ENCODE measurements at regions of chr7 and their contacts with region 1.

Region 1: GRCh38 chr7:65872776-65873581 is at the start of gene VKORC1L1:
- DNase-seq: peak; percentile 90 to 98 (median 94)
- ATAC-seq: peak; percentile 86
- H3K4me3 ChIP-seq: peak within 1 kb of the TSS; percentile 48 to 69
- H3K4me3 Mint-ChIP-seq: peak within 1 kb of the TSS; percentile 85
- H3K27ac ChIP-seq: peak within 1 kb of the TSS in 1 of 2 experiments; percentile 54
- H3K27ac Mint-ChIP-seq: peak within 1 kb of the TSS; percentile 66
- H3K4me1 ChIP-seq: no peaks in the 10 kb centered on the region
- H3K4me1 Mint-ChIP-seq: peaks cover 8% of the 10 kb centered on the region
- H3K27me3 ChIP-seq: no peaks in the 10 kb centered on the region
- H3K27me3 Mint-ChIP-seq: no peaks in the 10 kb centered on the region
- CTCF ChIP-seq: no peak
- total RNA-seq, gene VKORC1L1: 1.4 to 2.0 TPM

Region 2: GRCh38 chr7:64313740-64314491 is 1559.1 kb before region 1 on chr7 and contains the start of gene ZNF736:
- CTCF ChIA-PET with region 1: no interaction called
- POLR2A ChIA-PET with region 1: no interaction called
- intact Hi-C with region 1: loop called in 1 of 2 experiments (anchors 5 kb)
- DNase-seq: peak; percentile 71 to 94 (median 86)
- ATAC-seq: peak; percentile 100
- H3K4me3 ChIP-seq: peak within 1 kb of the TSS; percentile 66 to 98
- H3K4me3 Mint-ChIP-seq: peak within 1 kb of the TSS; percentile 99
- H3K27ac ChIP-seq: peak within 1 kb of the TSS; percentile 76 to 88
- H3K27ac Mint-ChIP-seq: peak within 1 kb of the TSS; percentile 98
- H3K4me1 ChIP-seq: peaks cover 25% of the 10 kb centered on the region
- H3K4me1 Mint-ChIP-seq: peaks cover 32% of the 10 kb centered on the region
- H3K27me3 ChIP-seq: no peaks in the 10 kb centered on the region
- H3K27me3 Mint-ChIP-seq: no peaks in the 10 kb centered on the region
- CTCF ChIP-seq: no peak
- total RNA-seq, gene ZNF736: 23.4 to 26.6 TPM

Region 3: DNA sequence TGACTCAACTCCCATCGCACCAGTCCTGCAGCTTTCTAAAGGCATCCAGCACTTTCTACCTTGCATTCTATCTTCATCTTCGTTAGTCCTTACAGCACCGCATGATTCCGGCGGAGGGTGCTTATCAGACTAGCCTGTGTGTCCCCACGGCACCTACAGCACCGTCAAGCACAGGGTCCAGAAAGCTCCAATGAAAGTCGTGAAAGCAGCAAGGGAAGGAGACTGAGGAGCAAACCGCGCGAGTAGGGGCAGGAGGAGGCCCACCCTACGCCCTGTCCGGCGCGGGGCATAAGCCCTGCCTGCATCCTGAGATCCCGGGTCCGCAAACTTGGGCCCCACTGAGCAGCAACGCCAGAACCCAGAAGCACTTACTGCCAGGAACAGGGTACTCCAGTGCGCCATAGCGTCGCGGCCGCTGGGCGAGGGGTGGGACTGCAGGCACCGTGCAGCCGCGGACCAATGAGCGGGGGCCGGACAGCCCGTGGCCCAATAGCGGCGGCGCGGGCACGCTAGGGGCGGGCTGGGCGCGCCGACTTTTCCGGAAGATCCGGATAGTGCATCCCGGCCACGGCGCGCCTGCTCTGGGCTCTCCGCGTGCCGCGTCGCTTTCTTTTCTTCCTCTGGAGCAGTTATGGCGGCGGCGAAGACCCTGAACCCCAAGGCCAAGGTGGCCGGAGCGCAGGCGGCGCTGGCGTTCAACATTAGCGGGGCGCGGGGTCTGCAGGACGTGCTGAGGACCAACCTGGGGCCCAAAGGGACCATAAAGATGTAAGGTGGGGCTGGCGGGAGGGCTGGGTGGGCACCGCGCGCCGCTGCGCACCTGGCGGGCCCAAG is 122.3 kb before region 1 on chr7:
- CTCF ChIA-PET with region 1: no interaction called
- POLR2A ChIA-PET with region 1: no interaction called
- intact Hi-C with region 1: loop called (anchors 1 to 5 kb)
- DNase-seq: peak; percentile 65 to 91 (median 87)
- ATAC-seq: peak; percentile 96
- H3K4me3 ChIP-seq: peak overlapping the region; percentile 77 to 88
- H3K4me3 Mint-ChIP-seq: peak overlapping the region; percentile 88
- H3K27ac ChIP-seq: peak overlapping the region; percentile 74 to 81
- H3K27ac Mint-ChIP-seq: peak overlapping the region; percentile 88
- H3K4me1 ChIP-seq: peaks cover 16% of the 10 kb centered on the region
- H3K4me1 Mint-ChIP-seq: peaks cover 35% of the 10 kb centered on the region
- H3K27me3 ChIP-seq: no peaks in the 10 kb centered on the region
- H3K27me3 Mint-ChIP-seq: no peaks in the 10 kb centered on the region
- CTCF ChIP-seq: no peak

Region 4: GRCh38 chr7:65809259-65809981 is 63.6 kb before region 1 on chr7:
- CTCF ChIA-PET with region 1: no interaction called
- POLR2A ChIA-PET with region 1: no interaction called
- intact Hi-C with region 1: no loop called
- DNase-seq: no peak
- ATAC-seq: no peak
- H3K4me3 ChIP-seq: no peak overlapping the region
- H3K4me3 Mint-ChIP-seq: no peak overlapping the region
- H3K27ac ChIP-seq: no peak overlapping the region
- H3K27ac Mint-ChIP-seq: no peak overlapping the region
- H3K4me1 ChIP-seq: no peaks in the 10 kb centered on the region
- H3K4me1 Mint-ChIP-seq: no peaks in the 10 kb centered on the region
- H3K27me3 ChIP-seq: no peaks in the 10 kb centered on the region
- H3K27me3 Mint-ChIP-seq: no peaks in the 10 kb centered on the region
- CTCF ChIP-seq: no peak

Region 5: GRCh38 chr7:66075590-66076461 is 202.8 kb after region 1 on chr7 and contains the start of gene ASL:
- CTCF ChIA-PET with region 1: no interaction called
- POLR2A ChIA-PET with region 1: no interaction called
- intact Hi-C with region 1: loop called in 1 of 2 experiments (anchors 5 kb)
- DNase-seq: peak; percentile 65 to 93 (median 84)
- ATAC-seq: peak; percentile 98
- H3K4me3 ChIP-seq: peak within 1 kb of the TSS; percentile 66 to 96
- H3K4me3 Mint-ChIP-seq: peak within 1 kb of the TSS; percentile 87
- H3K27ac ChIP-seq: peak within 1 kb of the TSS; percentile 55 to 67
- H3K27ac Mint-ChIP-seq: no peak within 1 kb of the TSS
- H3K4me1 ChIP-seq: peaks cover 11% of the 10 kb centered on the region
- H3K4me1 Mint-ChIP-seq: peaks cover 14% of the 10 kb centered on the region
- H3K27me3 ChIP-seq: no peaks in the 10 kb centered on the region
- H3K27me3 Mint-ChIP-seq: no peaks in the 10 kb centered on the region
- CTCF ChIP-seq: no peak
- total RNA-seq, gene ASL: 6.8 to 7.5 TPM

Region 6: DNA sequence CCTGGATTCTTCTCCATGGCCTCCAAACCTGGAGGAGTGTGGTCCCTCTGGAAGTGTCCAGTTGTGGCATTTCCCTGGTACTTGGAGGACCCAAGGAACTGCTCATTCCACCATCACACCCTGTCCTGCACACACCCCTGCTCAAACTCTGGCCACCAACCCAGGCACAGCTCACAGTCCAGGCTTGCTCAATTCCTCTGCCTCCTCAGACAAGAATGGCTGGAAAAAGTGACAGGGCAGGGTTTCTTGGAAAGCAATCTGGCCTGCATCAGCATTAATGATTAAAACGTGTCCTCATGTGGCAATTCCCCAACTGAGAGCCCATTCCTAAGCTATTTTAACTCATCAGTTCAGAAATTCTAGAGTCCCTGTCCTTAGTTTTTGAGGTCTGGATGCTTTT is 314.9 kb after region 1 on chr7:
- CTCF ChIA-PET with region 1: no interaction called
- POLR2A ChIA-PET with region 1: no interaction called
- intact Hi-C with region 1: no loop called
- DNase-seq: no peak
- ATAC-seq: no peak
- H3K4me3 ChIP-seq: no peak overlapping the region
- H3K4me3 Mint-ChIP-seq: no peak overlapping the region
- H3K27ac ChIP-seq: no peak overlapping the region
- H3K27ac Mint-ChIP-seq: no peak overlapping the region
- H3K4me1 ChIP-seq: no peaks in the 10 kb centered on the region
- H3K4me1 Mint-ChIP-seq: no peaks in the 10 kb centered on the region
- H3K27me3 ChIP-seq: no peaks in the 10 kb centered on the region
- H3K27me3 Mint-ChIP-seq: no peaks in the 10 kb centered on the region
- CTCF ChIP-seq: no peak

Region 7: DNA sequence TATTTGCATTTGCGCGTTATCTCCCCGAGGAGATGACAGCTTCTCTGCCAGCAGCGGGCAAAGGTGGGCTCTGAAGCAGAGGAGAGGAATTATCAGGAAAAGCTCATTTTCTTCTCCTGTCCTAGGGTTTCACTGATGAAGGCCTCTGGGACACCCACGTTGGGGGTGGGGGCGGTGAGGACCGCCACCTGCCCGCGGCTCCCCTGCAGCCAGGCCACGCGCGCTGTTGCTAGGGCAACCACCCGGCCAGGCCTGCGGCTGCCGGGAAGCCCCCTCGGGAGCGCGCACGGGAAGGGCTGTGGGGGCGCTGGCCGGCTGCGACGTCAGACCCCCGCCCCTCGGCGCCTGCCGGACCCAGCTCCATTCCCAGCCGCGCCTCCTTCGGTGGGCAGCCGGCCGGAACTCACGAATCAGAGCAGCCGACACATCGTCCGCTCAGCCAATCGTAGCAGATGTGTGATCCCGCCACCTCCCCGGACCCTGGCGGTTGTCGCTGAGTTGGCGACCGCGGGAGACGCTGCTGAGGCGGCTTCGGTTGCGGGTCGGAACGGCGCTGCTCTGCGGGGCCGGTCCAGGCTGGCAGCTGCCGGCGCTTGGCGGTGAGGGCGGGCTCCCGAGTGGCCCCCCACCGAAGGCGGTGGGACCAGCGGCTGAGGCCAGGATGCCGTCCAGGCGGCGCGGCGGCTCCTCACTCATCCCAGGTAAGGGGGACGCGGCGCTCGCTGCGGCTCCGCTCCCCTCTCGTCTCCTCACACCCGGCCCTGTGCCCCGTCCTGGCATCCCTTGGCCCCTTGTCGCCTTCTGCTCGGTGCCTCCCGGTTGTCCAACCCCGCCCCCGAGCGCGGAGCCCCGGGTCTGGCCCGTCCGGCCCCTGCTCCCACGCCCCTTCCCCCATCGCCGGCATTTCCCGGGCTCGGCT is 332.1 kb after region 1 on chr7 and contains the start of gene TPST1:
- CTCF ChIA-PET with region 1: no interaction called
- POLR2A ChIA-PET with region 1: no interaction called
- intact Hi-C with region 1: loop called in 1 of 2 experiments (anchors 5 kb)
- DNase-seq: peak; percentile 61 to 90 (median 75)
- ATAC-seq: peak; percentile 89
- H3K4me3 ChIP-seq: peak within 1 kb of the TSS; percentile 59 to 84
- H3K4me3 Mint-ChIP-seq: peak within 1 kb of the TSS; percentile 89
- H3K27ac ChIP-seq: peak within 1 kb of the TSS in 1 of 2 experiments; percentile 54
- H3K27ac Mint-ChIP-seq: peak within 1 kb of the TSS; percentile 66
- H3K4me1 ChIP-seq: peaks cover 35% of the 10 kb centered on the region
- H3K4me1 Mint-ChIP-seq: peaks cover 42% of the 10 kb centered on the region
- H3K27me3 ChIP-seq: peaks cover 0 to 3% of the 10 kb centered on the region in 2 experiments
- H3K27me3 Mint-ChIP-seq: peaks cover 6% of the 10 kb centered on the region
- CTCF ChIP-seq: peak; percentile 48
- total RNA-seq, gene TPST1: 4.3 to 6.6 TPM

Region 8: GRCh38 chr7:66844552-66845378 is 971.8 kb after region 1 on chr7:
- CTCF ChIA-PET with region 1: no interaction called
- POLR2A ChIA-PET with region 1: no interaction called
- intact Hi-C with region 1: loop called (anchors 10 kb)
- DNase-seq: peak; percentile 98 to 100 (median 99)
- ATAC-seq: peak; percentile 87
- H3K4me3 ChIP-seq: peak overlapping the region; percentile 90 to 96
- H3K4me3 Mint-ChIP-seq: peak overlapping the region; percentile 97
- H3K27ac ChIP-seq: peak overlapping the region; percentile 97 to 98
- H3K27ac Mint-ChIP-seq: peak overlapping the region; percentile 100
- H3K4me1 ChIP-seq: peaks cover 13% of the 10 kb centered on the region
- H3K4me1 Mint-ChIP-seq: peaks cover 25% of the 10 kb centered on the region
- H3K27me3 ChIP-seq: no peaks in the 10 kb centered on the region
- H3K27me3 Mint-ChIP-seq: no peaks in the 10 kb centered on the region
- CTCF ChIP-seq: peak; percentile 53

Region 9: DNA sequence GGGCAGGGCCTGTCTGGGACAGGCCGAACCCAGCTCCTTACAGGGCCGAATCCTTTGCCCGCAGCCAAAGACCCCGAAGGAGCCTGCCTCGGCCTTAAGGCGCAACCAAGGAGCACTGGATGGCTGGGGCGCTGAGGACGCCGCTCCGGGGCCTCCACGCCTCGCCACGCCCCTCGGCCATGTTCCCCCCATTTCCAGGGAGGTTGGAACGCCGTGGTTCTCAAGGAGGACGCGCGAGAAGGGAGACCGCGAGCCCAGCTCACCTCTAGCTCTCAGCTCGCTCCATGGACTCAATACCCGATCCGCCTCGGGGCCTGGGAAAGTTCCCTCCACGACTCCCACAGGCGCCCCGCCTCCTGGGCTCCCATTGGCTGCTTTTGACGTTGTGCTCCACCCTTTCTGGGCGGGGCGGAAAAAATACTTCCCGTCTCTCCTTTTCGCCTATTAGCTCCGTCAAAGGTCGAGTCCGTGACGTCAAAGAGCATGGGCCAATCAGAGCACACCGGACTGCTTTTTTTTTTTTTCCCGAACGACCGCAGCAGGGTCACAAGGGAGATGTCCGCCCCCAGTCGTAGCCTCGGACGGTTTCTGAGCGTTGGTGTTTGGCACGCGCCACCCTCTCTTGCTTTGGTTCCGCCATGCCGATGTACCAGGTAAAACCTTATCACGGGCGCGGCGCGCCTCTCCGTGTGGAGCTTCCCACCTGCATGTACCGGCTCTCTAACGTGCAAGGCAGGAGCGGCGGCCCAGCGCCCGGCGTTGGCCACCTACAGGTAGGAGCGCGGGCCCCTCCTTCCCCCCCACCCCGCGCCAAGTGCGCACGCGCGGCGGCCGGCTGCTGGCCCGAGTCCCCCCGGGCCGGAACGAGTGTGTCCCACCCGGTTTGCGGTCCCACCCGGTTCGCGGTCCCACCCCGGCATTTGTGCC is 1429.4 kb after region 1 on chr7:
- CTCF ChIA-PET with region 1: no interaction called
- POLR2A ChIA-PET with region 1: no interaction called
- intact Hi-C with region 1: loop called (anchors 10 kb)
- DNase-seq: peak; percentile 93 to 99 (median 97)
- ATAC-seq: peak; percentile 77
- H3K4me3 ChIP-seq: peak overlapping the region; percentile 81 to 99
- H3K4me3 Mint-ChIP-seq: peak overlapping the region; percentile 97
- H3K27ac ChIP-seq: peak overlapping the region; percentile 92 to 93
- H3K27ac Mint-ChIP-seq: peak overlapping the region; percentile 99
- H3K4me1 ChIP-seq: no peaks in the 10 kb centered on the region
- H3K4me1 Mint-ChIP-seq: peaks cover 27% of the 10 kb centered on the region
- H3K27me3 ChIP-seq: no peaks in the 10 kb centered on the region
- H3K27me3 Mint-ChIP-seq: no peaks in the 10 kb centered on the region
- CTCF ChIP-seq: no peak

Measured in CD8-positive, alpha-beta T cell (primary cell).